Activated CD4-positive, alpha-beta T cell treated with anti-CD3 and anti-CD28 coated beads for 36 hours (primary cell): ENCODE measurements at regions of chr7 and their contacts with region 1.

Region 1: DNA sequence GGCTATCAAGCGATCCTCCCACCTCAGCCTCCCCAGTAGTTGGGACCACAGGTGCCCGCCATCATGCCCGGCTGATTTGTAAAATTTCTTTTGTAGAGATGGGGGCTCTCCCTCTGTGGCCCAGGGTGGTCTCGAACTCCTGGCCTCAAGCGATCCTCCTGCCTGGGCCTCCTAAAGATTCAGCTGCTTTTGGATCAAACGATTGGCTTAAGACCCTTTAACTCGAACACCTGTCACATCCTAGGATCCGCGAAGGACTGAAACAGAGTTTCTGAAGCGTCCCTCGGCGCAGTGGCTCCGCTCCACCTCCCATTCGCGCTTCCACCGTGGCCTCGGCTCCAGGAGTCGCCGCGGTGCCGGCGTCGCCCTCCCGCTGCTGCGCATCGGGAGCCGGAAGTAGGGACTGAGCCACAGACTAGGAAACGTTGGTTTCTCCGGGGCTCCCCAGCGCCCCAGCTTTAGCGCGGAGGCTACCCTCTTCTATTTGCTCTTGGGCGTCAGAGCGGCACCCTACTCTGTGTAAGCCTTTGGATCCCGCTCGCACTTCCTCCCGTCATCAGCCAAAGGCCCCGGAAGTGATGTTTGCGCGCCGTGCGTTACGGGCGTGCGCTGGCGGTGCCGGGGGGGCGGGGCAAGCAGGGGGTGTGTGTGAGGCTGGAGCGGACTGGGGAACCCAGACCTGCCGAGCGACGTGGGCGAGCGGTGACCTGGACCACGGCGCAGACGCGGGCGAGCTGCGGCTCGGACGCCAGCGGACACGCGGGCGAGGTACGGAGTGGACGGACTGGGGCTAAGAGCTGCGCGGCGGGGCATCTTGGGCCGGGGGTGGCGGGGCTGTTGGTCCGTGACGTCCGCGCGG is 53.0 kb downstream of the KCTD7 start:
- DNase-seq: peak; percentile 98
- ATAC-seq: peak; percentile 95
- H3K4me3 Mint-ChIP-seq: peak overlapping the region; percentile 90
- H3K27ac Mint-ChIP-seq: peak overlapping the region; percentile 92
- H3K4me1 Mint-ChIP-seq: peaks cover 34% of the 10 kb centered on the region
- H3K27me3 Mint-ChIP-seq: no peaks in the 10 kb centered on the region

Region 2: DNA sequence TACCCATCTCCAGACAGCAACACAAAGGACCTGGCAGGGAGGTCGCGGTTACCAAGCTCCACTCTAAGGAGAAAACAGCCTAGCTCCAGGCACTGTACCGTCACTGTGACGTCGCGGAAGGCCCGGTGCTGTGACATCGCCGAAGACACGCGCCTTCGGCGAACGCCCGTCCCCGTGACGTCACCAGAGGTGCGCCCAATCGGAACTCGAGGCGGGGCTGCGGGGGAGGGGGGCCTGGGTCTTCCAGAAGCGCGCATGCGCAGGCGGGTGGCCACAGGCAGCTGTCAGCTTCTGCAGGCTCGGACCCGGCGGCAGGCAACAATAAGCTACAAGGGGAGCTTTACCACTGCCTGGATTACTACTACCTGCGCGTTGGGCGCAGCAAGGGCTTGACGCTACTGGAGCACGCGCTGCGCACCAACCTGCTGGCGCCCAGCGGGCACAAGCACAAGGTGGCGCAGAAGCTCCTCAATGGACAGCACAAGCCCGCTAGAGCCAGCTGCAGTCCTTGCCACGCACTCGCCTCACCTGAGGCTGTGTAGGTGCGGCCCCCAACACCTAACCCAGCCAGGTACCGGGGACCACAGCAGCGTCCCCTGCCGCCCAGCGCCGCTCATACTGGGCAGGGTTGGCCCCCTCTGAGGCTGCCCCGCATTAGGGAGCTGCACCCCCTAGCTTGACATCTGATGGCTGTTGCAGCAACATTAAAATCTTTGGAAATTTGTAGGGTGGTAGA is 268.2 kb before region 1 on chr7:
- CTCF ChIA-PET with region 1: no interaction called
- POLR2A ChIA-PET with region 1: no interaction called
- intact Hi-C with region 1: loop called in 1 of 2 experiments (anchors 10 kb)
- DNase-seq: peak; percentile 93
- ATAC-seq: peak; percentile 89
- H3K4me3 Mint-ChIP-seq: peak overlapping the region; percentile 64
- H3K27ac Mint-ChIP-seq: no peak overlapping the region
- H3K4me1 Mint-ChIP-seq: peaks cover 7% of the 10 kb centered on the region
- H3K27me3 Mint-ChIP-seq: no peaks in the 10 kb centered on the region

Region 3: DNA sequence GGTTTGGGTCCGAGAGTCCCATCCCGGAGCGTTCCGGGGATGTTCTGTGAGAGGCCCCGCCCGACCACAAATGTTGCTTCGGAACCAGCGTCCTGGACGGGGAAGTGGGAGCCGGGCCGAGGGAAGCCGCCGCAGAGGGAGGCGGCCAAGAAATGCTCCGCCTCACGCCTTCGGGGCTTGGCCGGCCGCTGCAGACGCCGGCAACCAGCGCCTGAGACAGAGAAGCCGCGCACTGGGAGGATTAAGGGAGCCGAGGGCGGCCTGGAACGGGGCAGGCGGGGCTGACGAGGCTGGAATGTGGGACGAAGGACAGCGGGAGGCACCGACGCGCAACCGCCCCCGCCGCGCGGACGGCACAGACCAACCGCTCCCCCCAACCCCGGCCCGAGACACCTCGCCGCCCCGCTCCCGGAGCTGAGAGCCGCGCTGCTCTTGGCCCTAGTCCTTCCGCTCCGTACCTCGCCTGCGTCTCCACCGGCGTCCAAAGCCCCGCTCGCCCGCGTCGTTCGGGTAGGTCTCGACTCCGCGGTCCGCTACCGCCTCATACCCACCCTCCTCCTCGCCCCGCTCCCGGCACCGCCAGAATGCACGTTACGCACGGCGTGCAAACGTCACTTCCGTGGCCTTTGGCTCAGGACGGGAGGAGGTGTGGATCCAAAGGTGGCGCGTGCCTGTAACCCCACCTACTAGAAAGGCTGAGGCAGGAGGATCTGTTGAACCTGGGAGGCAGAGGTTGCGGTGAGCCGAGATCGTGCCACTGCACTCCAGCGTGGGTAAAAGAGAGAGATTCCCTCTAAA is 89.7 kb before region 1 on chr7:
- CTCF ChIA-PET with region 1: interaction called, 3 read pairs
- POLR2A ChIA-PET with region 1: no interaction called
- intact Hi-C with region 1: loop called (anchors 1 kb)
- DNase-seq: peak; percentile 96
- ATAC-seq: peak; percentile 98
- H3K4me3 Mint-ChIP-seq: peak overlapping the region; percentile 94
- H3K27ac Mint-ChIP-seq: peak overlapping the region; percentile 98
- H3K4me1 Mint-ChIP-seq: peaks cover 46% of the 10 kb centered on the region
- H3K27me3 Mint-ChIP-seq: no peaks in the 10 kb centered on the region

Region 4: DNA sequence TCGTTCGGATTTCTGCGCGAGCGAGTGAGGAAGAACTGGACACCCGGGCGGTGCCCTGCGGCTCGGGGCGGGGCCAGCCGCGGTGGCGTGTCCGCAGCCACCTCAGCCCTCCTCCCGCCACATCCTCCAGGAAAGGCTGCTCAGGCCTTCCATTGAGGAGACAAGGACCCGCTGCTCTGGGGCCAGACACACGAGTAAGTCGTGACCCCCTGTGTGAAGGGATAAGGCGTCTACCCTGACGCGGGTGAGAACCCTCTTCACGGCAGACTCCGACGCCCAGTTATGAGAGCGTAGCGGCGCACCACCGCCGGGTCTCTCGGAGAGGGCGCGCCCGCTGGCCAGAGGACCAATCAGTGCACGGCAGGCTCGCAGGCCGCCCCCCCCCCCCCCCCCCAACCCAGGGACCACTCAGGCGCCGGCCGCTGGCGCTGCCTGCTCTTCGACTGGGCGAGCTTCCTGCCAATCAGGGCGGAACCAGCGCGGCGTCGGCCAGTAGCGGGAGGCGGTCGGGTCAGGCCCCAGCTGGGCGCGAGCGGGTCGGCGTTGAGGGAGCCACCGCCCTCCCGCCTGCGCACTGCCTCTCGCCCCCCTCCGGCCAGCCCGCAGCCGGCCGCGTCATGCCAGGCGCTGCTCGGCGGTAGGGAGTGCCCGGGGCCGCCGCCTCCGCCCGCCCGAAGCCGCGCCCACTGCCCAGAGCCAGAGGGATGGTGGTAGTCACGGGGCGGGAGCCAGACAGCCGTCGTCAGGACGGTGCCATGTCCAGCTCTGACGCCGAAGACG is 53.2 kb before region 1 on chr7 and contains the start of gene KCTD7:
- CTCF ChIA-PET with region 1: no interaction called
- POLR2A ChIA-PET with region 1: no interaction called
- intact Hi-C with region 1: loop called in 1 of 2 experiments (anchors 1 kb)
- DNase-seq: peak; percentile 98
- ATAC-seq: peak; percentile 94
- H3K4me3 Mint-ChIP-seq: peak within 1 kb of the TSS; percentile 82
- H3K27ac Mint-ChIP-seq: peak within 1 kb of the TSS; percentile 86
- H3K4me1 Mint-ChIP-seq: peaks cover 45% of the 10 kb centered on the region
- H3K27me3 Mint-ChIP-seq: peaks cover 2% of the 10 kb centered on the region
- total RNA-seq, gene KCTD7: 7.8 TPM

Region 5: DNA sequence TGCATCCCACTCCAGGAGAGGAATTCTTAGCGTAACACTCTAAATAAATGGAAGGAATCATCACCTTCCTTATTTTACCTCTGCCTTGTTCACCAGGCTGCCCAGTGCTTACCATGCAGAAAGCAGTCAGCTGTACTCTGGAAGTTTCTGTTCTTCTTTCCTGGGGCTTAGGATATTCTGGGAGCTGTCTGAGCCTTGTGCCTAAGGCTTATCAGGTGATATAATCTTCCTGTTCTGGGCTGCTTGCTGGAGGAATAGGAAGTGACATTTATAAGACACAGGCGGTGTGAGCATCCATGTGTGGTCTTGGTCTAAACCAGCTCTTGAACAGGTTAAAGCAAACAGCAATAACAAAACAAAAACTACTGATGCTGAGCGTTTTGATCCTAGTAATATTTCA is 39.5 kb before region 1 on chr7:
- CTCF ChIA-PET with region 1: no interaction called
- POLR2A ChIA-PET with region 1: no interaction called
- intact Hi-C with region 1: no loop called
- DNase-seq: no peak
- ATAC-seq: no peak
- H3K4me3 Mint-ChIP-seq: no peak overlapping the region
- H3K27ac Mint-ChIP-seq: no peak overlapping the region
- H3K4me1 Mint-ChIP-seq: peaks cover 3% of the 10 kb centered on the region
- H3K27me3 Mint-ChIP-seq: no peaks in the 10 kb centered on the region

Region 6: GRCh38 chr7:66790196-66790595 is 108.5 kb after region 1 on chr7:
- CTCF ChIA-PET with region 1: no interaction called
- POLR2A ChIA-PET with region 1: no interaction called
- intact Hi-C with region 1: no loop called
- DNase-seq: no peak
- ATAC-seq: no peak
- H3K4me3 Mint-ChIP-seq: no peak overlapping the region
- H3K27ac Mint-ChIP-seq: no peak overlapping the region
- H3K4me1 Mint-ChIP-seq: no peaks in the 10 kb centered on the region
- H3K27me3 Mint-ChIP-seq: no peaks in the 10 kb centered on the region

Region 7: DNA sequence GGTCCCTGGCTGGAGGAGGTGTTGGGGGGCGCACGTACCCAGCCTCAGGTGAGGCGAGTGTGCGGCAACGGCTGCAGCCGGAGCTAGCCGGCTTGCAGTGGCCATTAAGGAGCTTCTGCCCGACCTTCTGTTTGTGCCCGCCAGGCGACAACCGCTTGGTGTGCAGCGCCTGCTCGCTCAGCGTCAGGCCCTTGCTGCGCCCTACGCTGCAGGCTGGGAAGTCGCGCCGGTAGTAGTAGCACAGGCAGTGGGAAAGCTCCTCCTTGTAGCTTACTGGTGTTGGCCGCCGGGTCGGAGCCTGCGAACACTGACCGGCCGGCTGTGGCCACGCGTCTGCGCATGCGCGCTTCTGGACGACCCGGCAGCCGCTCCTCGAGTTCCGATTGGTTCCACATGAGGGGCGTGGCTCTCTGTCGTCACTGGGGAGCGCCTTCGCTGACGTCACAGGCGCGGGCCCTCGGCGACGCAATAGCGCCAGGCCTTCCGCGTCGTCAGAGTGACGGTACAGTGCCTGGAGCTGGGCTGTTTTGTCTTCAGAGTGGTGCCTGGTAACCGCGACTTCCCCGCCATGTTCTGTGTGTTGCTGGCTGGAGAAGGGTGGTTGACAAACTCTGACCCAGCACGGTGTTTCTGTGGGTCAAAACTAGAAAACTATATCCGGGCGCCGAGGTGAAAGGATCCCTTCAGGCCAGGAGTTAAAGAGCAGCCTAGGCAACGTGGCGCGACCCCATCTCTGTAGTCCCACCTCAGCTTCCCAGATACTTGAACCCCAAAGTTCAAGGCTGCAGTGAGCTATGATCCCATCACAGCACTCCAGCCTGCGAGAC is 163.0 kb after region 1 on chr7:
- CTCF ChIA-PET with region 1: no interaction called
- POLR2A ChIA-PET with region 1: no interaction called
- intact Hi-C with region 1: loop called in 1 of 2 experiments (anchors 1 kb)
- DNase-seq: peak; percentile 99
- ATAC-seq: peak; percentile 94
- H3K4me3 Mint-ChIP-seq: peak overlapping the region; percentile 95
- H3K27ac Mint-ChIP-seq: peak overlapping the region; percentile 99
- H3K4me1 Mint-ChIP-seq: peaks cover 24% of the 10 kb centered on the region
- H3K27me3 Mint-ChIP-seq: no peaks in the 10 kb centered on the region

Region 8: DNA sequence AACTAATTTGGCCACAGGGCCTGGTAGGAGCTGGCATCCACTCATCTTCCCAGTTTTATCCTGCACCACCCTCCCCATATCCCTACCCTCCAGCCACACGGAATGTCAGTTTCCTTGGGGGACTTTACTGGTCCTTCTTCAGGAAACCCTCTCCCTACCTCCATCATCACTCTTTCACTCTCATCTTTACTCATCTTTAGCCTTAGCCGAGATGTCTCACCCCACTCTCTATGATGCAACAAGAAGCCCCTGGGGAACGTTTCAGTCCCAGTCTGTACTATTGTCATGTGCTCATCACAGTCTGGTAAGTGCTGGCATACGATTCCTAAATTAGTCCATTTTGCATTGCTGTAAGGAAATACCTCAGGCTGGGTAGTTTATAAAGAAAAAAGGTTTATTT is 204.4 kb after region 1 on chr7:
- CTCF ChIA-PET with region 1: no interaction called
- POLR2A ChIA-PET with region 1: no interaction called
- intact Hi-C with region 1: loop called in 1 of 2 experiments (anchors 5 kb)
- DNase-seq: peak; percentile 33
- ATAC-seq: peak; percentile 13
- H3K4me3 Mint-ChIP-seq: no peak overlapping the region
- H3K27ac Mint-ChIP-seq: peak overlapping the region; percentile 72
- H3K4me1 Mint-ChIP-seq: peaks cover 44% of the 10 kb centered on the region
- H3K27me3 Mint-ChIP-seq: no peaks in the 10 kb centered on the region